BJ (cell line): ENCODE measurements at regions of chr1 and their contacts with region 1.

Region 1: DNA sequence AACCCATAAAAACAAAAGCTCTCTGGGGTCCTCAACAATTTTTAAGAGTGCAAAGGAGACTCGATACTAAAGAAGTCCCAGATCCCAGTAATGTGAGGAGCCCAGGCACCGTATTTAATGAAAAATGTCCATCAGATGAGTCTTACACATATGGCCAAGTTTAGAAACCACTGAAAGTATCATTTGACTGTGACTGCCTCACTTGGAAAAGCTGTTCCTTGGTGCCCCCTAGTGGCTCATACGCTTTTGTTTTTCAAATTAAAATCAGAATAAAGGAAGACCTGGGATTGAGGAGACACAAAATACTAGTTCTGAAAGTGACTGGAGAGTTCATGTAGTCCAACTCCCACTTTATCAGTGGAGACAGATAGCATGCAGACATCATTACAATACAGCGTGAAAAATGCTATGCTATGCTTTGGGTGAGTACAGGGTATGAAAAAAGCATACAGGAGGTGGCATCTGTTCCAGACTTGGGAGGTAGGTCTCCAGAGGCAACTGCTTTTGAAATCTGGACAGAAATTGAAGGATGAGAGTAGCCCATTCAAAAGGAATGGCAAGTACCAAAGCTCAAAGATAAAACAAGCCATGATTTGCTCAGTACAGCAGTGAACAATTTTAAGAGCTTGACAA is 33.8 kb downstream of the GDAP2 start:
- DNase-seq: peak; percentile 39
- H3K4me3 ChIP-seq: no peak overlapping the region
- H3K27me3 ChIP-seq: no peaks in the 10 kb centered on the region
- CTCF ChIP-seq: peak; percentile 68

Region 2: DNA sequence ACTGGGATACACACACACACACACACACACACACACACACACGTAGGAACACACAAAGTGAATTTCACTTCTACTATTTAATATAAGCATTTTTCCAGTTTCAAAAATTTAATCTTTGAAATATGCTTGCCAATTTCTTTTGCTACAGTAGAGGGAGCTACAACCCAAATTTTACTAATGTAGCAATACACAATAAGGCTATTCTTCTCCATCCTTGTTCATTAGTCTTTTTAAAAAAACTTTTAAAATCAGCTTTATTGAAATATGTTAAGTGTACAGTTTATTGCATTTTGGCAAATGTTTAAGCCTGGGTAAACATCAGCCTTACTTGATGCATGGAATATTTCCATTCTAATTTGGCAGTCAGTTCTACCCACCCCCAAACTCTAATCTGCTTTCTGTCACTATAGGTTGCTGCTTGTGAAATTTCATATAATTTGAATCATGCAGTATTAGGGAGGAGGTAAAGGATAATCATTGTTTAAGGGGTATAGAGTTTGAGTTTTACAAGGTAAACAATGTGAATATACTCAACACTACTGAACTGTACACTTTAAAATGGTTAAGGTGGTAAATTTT is 382.8 kb before region 1 on chr1:
- CTCF ChIA-PET with region 1: interaction called, 29 read pairs
- POLR2A ChIA-PET with region 1: no interaction called
- DNase-seq: no peak
- H3K4me3 ChIP-seq: no peak overlapping the region
- H3K27me3 ChIP-seq: no peaks in the 10 kb centered on the region
- CTCF ChIP-seq: peak; percentile 50

Region 3: GRCh38 chr1:117534995-117535467 is 360.6 kb before region 1 on chr1:
- CTCF ChIA-PET with region 1: interaction called, 29 read pairs
- POLR2A ChIA-PET with region 1: no interaction called
- DNase-seq: no peak
- H3K4me3 ChIP-seq: no peak overlapping the region
- H3K27me3 ChIP-seq: no peaks in the 10 kb centered on the region
- CTCF ChIP-seq: peak; percentile 68

Region 4: GRCh38 chr1:117815926-117816325 is 79.7 kb before region 1 on chr1:
- CTCF ChIA-PET with region 1: interaction called, 10 read pairs
- POLR2A ChIA-PET with region 1: no interaction called
- DNase-seq: no peak
- H3K4me3 ChIP-seq: no peak overlapping the region
- H3K27me3 ChIP-seq: no peaks in the 10 kb centered on the region
- CTCF ChIP-seq: no peak

Region 5: DNA sequence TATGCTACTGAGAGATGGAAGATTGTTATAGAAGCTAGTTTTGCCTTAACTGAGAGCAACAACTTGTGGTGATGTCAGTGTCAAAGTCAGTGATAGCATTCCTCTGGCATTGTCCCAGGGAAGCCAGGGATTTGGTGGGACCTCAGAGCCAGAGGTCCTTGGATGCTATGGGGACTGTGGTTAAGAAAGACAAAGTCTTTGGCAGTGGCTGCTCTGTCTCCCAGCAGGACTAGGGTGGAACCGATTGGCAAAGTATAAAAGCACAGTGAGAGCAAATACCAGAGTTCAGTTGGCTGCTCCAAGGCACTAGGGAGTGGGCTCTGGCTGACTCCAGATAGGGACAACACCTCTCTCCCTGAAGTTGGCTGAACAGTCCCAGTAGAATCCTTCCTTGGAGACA is 71.0 kb before region 1 on chr1:
- CTCF ChIA-PET with region 1: interaction called, 14 read pairs
- POLR2A ChIA-PET with region 1: no interaction called
- DNase-seq: no peak
- H3K4me3 ChIP-seq: no peak overlapping the region
- H3K27me3 ChIP-seq: no peaks in the 10 kb centered on the region
- CTCF ChIP-seq: no peak

Region 6: GRCh38 chr1:117997573-117997972 is 102.0 kb after region 1 on chr1:
- CTCF ChIA-PET with region 1: no interaction called
- POLR2A ChIA-PET with region 1: no interaction called
- DNase-seq: no peak
- H3K4me3 ChIP-seq: no peak overlapping the region
- H3K27me3 ChIP-seq: no peaks in the 10 kb centered on the region
- CTCF ChIP-seq: no peak

Region 7: DNA sequence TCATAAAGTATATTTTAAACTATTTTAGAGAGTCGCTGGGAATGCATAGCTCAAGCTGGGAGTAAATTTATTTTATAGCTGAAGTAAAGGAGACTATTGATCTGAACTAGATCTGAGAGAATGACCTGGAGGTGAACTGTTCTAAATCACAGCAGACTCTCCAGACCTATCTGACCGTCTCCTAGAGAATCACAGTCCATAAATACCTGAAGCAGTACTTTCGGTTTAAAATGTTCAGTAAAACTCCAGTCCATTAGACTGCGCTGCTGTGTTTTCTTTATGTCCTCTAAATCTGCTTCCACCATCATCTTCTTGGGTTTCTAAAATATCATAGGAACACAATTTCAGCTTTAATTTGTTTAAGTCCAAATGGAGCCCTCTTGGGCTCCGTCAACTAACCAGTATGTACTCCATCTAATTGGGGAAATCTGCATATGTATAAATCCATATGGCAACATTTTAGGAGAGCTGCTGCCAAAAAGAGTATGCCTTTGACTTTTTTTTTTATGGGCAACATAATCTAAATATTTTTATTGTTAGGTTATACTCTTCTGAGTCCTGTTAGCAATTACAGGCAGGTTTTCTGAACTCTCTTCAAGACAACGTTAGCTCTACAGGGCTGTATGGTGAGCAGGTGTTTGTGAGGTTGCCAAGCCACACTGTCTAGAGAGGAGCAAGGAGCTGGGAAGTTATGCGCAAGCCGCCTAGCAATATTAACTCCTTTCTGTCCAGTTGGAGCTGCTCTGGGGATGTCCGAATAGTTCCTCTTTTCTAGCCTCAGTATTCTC is 178.2 kb after region 1 on chr1:
- CTCF ChIA-PET with region 1: no interaction called
- POLR2A ChIA-PET with region 1: no interaction called
- DNase-seq: peak; percentile 10
- H3K4me3 ChIP-seq: no peak overlapping the region
- H3K27me3 ChIP-seq: no peaks in the 10 kb centered on the region
- CTCF ChIP-seq: no peak